Right ventricle myocardium inferior (tissue), 1 donor: ENCODE measurements at regions of chr21 and their contacts with region 1.

Region 1: GRCh38 chr21:23853796-23854379 is 1753.4 kb downstream of the MRPL39 start:
- DNase-seq: no peak
- ATAC-seq: no peak

Region 2: DNA sequence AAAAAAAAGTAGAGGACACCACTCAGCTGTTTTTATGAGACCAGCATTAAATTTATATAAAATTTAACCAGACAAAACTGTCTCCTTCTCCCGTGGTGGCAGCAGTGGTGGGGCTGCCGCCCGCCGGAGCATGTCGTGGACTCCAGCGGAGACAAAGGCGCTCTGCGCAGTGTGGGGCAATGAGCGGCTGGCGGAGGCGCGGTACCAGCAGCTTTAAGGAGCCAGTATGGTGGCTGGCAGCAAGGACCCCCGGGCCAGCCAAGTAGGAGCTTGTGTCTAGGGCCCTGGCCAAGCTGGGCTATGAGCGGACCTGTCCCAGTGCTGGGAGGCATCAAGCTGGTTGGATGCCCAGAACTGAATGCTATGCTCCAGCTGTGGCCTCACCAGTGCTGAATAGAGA is 752.8 kb before region 1 on chr21:
- intact Hi-C with region 1: no loop called
- DNase-seq: no peak
- ATAC-seq: no peak

Region 3: GRCh38 chr21:24276204-24276603 is 422.3 kb after region 1 on chr21:
- intact Hi-C with region 1: no loop called
- DNase-seq: no peak
- ATAC-seq: no peak

Region 4: GRCh38 chr21:25039461-25040380 is 1185.8 kb after region 1 on chr21:
- intact Hi-C with region 1: loop called (anchors 10 kb)
- DNase-seq: no peak
- ATAC-seq: no peak